ENCODE measurements at regions of chr7 and their contacts with region 1.

Region 1: DNA sequence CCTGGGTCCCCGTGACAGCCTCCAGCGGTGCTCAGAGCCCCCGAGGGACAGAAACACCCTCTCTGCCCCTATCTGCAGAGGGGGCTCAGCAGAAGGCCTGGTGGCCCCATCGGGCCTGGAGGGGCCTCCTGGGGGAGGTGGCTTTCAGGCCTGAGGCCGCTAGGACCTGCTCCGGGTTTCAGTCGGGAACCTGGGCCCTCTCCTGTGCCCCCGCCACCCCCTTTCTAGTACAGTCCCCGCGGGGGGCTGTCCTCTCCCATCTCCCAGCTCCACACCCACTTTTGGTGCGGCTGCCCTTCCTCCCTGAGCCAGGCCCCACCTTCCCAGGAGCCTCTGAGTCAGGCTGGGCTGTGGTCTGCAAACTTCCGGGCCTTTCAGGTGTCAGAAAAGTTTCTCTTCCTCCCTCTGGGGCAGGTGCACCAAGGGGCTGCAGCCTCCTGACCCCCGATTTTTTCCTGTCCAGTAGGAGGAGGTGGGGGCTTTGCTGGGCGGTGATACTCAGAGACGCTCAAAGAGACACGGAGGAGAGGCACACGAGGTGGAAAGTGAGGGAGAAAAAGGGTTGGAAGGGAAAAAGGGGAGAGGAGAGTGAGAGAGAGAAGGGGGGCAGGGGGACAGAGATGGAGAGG is 692 bp downstream of the CARD11 start:
- DNase-seq: peak; percentile 21 to 72 (median 52)
- ATAC-seq: peak; percentile 76
- H3K4me3 ChIP-seq: peak overlapping the region; percentile 85
- H3K4me3 Mint-ChIP-seq: peak overlapping the region; percentile 91 to 98 (median 96)
- H3K27ac ChIP-seq: peak overlapping the region; percentile 100
- H3K27ac Mint-ChIP-seq: peak overlapping the region; percentile 82 to 97 (median 93)
- H3K4me1 ChIP-seq: peaks cover 38 to 54% of the 10 kb centered on the region in 2 donors
- H3K4me1 Mint-ChIP-seq: peaks cover 39 to 73% (median 56%) of the 10 kb centered on the region in 7 donors
- H3K27me3 ChIP-seq: no peaks in the 10 kb centered on the region
- H3K27me3 Mint-ChIP-seq: no peaks in the 10 kb centered on the region

Region 2: DNA sequence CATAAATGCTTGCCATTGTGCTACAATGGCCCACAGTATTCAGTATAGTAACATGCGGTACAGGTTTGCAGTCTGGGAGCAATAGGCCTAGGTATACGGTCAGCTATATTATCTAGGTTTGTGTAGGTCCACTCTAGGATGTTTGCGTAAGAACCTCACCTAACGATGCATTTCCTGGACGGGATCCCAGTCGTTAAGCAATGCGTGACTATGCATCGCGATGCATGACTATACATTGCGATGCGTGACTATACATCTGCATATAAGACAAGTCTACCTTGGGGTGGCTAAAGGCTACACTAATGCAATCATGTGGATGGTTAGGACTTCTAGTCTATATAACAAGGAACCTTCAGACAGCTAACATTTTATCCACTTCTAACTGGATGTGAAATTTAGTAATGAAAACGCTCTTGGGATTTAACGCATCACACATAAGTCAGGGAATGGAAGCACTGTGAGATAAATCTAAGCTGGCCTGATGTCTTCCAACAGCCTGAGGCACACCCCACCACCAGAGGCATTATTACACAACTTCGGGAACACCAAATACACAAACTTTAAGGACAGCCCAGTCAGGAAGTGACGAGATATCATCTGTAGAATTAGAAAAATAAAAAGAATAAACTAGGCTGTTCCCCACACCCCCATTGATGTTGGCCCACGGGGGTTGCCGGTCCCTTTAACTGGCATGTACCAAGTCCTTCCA is 208.1 kb before region 1 on chr7:
- CTCF ChIA-PET with region 1: no interaction called
- POLR2A ChIA-PET with region 1: no interaction called
- intact Hi-C with region 1: no loop called
- DNase-seq: no peak
- ATAC-seq: no peak
- H3K4me3 ChIP-seq: no peak overlapping the region
- H3K4me3 Mint-ChIP-seq: no peak overlapping the region
- H3K27ac ChIP-seq: no peak overlapping the region
- H3K27ac Mint-ChIP-seq: no peak overlapping the region
- H3K4me1 ChIP-seq: peaks cover 0 to 7% of the 10 kb centered on the region in 2 donors
- H3K4me1 Mint-ChIP-seq: peaks cover 24 to 49% (median 28%) of the 10 kb centered on the region in 7 donors
- H3K27me3 ChIP-seq: no peaks in the 10 kb centered on the region
- H3K27me3 Mint-ChIP-seq: no peaks in the 10 kb centered on the region

Region 3: GRCh38 chr7:2863461-2864066 is 179.4 kb before region 1 on chr7:
- CTCF ChIA-PET with region 1: interaction called, 4 read pairs
- POLR2A ChIA-PET with region 1: no interaction called
- intact Hi-C with region 1: loop called in 1 of 2 experiments (anchors 5 kb)
- DNase-seq: peak in 6 of 9 donors; percentile 19 to 77 (median 31)
- ATAC-seq: peak; percentile 94
- H3K4me3 ChIP-seq: peak overlapping the region; percentile 14
- H3K4me3 Mint-ChIP-seq: peak overlapping the region in 9 of 10 donors; percentile 41 to 81 (median 68)
- H3K27ac ChIP-seq: peak overlapping the region; percentile 44
- H3K27ac Mint-ChIP-seq: peak overlapping the region; percentile 65 to 96 (median 88)
- H3K4me1 ChIP-seq: peaks cover 7 to 19% of the 10 kb centered on the region in 2 donors
- H3K4me1 Mint-ChIP-seq: peaks cover 12 to 29% (median 19%) of the 10 kb centered on the region in 7 donors
- H3K27me3 ChIP-seq: no peaks in the 10 kb centered on the region
- H3K27me3 Mint-ChIP-seq: no peaks in the 10 kb centered on the region

Region 4: GRCh38 chr7:2956526-2957368 is 86.2 kb before region 1 on chr7:
- CTCF ChIA-PET with region 1: no interaction called
- POLR2A ChIA-PET with region 1: no interaction called
- intact Hi-C with region 1: loop called in 1 of 2 experiments (anchors 1 kb)
- DNase-seq: peak in 1 of 9 donors; percentile 42
- ATAC-seq: peak; percentile 39
- H3K4me3 ChIP-seq: no peak overlapping the region
- H3K4me3 Mint-ChIP-seq: peak overlapping the region in 1 of 10 donors; percentile 41
- H3K27ac ChIP-seq: peak overlapping the region; percentile 14
- H3K27ac Mint-ChIP-seq: peak overlapping the region in 5 of 9 donors; percentile 24 to 85 (median 81)
- H3K4me1 ChIP-seq: peaks cover 29 to 37% of the 10 kb centered on the region in 2 donors
- H3K4me1 Mint-ChIP-seq: peaks cover 30 to 82% (median 70%) of the 10 kb centered on the region in 7 donors
- H3K27me3 ChIP-seq: no peaks in the 10 kb centered on the region
- H3K27me3 Mint-ChIP-seq: no peaks in the 10 kb centered on the region

Region 5: DNA sequence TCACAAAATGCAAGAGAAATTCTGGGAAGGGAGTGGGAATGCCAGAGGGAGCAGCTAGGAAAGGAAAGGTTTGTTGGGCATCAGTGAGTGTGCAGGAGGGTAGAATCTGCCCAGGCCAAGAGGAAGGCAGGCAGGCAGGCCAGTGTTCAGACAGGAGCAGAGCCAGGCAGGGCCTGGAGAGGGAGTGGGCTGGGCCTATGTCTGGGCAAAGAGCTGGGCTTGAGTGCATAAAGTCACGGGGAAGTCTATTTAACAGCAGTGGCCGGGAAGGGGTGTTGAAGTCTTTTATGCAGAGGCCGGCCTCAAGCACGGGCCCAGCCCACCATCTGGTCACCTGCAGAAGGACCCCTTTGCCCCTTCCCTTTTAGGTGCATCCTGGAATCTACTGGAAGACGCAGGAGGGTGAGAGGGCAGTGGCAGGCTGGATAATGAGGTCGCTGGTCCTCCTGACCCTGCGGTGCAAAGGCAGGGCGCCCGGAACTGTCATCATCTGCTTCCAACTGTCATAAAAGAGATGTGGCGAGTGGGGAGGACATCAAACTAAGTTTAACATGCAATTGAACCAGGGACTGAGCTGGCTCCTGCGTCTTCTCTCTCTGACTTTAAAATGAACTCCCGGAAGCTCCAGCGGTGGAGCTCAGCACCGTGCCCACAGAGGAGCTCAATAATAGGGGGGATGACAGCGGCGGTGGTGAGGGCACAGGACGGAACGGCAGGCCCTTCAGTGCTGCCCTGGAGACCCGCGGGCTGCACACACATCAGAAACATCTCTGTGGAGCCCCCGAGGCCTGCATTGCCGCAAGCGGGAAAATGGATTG is 28.8 kb before region 1 on chr7:
- CTCF ChIA-PET with region 1: interaction called, 4 read pairs
- POLR2A ChIA-PET with region 1: no interaction called
- intact Hi-C with region 1: loop called in 1 of 2 experiments (anchors 2 kb)
- DNase-seq: no peak
- ATAC-seq: no peak
- H3K4me3 ChIP-seq: no peak overlapping the region
- H3K4me3 Mint-ChIP-seq: no peak overlapping the region
- H3K27ac ChIP-seq: no peak overlapping the region
- H3K27ac Mint-ChIP-seq: peak overlapping the region in 6 of 9 donors; percentile 31 to 84 (median 61)
- H3K4me1 ChIP-seq: peaks cover 19 to 23% of the 10 kb centered on the region in 2 donors
- H3K4me1 Mint-ChIP-seq: peaks cover 36 to 65% (median 57%) of the 10 kb centered on the region in 7 donors
- H3K27me3 ChIP-seq: no peaks in the 10 kb centered on the region
- H3K27me3 Mint-ChIP-seq: no peaks in the 10 kb centered on the region

Region 6: DNA sequence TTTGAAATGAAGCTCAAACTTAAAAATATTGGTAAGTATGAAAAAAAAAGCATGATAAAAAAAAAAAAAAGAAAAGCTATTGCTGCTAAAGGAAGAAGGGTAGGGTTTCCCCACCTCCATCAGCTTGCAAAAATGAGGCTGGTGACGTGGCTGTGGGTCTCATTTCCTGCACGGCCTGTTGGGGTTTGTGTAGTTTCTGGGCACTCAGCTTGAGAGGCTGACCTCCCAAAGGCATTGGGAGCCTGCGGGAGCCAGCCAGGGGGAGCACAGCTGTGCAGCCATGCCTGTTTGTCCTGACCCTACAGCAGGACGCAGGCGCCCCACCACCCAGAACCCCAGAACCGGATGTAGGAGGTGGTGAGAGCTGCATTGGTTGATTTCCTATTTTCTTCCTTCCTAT is 49.5 kb after region 1 on chr7:
- CTCF ChIA-PET with region 1: interaction called, 4 read pairs
- POLR2A ChIA-PET with region 1: interaction called, 6 read pairs
- intact Hi-C with region 1: loop called (anchors 1 kb)
- DNase-seq: peak; percentile 35 to 87 (median 82)
- ATAC-seq: peak; percentile 87
- H3K4me3 ChIP-seq: peak overlapping the region; percentile 4
- H3K4me3 Mint-ChIP-seq: peak overlapping the region; percentile 43 to 94 (median 72)
- H3K27ac ChIP-seq: peak overlapping the region; percentile 81
- H3K27ac Mint-ChIP-seq: peak overlapping the region; percentile 93 to 100 (median 99)
- H3K4me1 ChIP-seq: peaks cover 68 to 76% of the 10 kb centered on the region in 2 donors
- H3K4me1 Mint-ChIP-seq: peaks cover 35 to 86% (median 72%) of the 10 kb centered on the region in 7 donors
- H3K27me3 ChIP-seq: no peaks in the 10 kb centered on the region
- H3K27me3 Mint-ChIP-seq: peaks cover 0 to 2% (median 0%) of the 10 kb centered on the region in 5 donors

Region 7: GRCh38 chr7:3154912-3155494 is 112.0 kb after region 1 on chr7:
- CTCF ChIA-PET with region 1: no interaction called
- POLR2A ChIA-PET with region 1: interaction called, 10 read pairs
- intact Hi-C with region 1: loop called (anchors 1 to 2 kb)
- DNase-seq: peak in 8 of 9 donors; percentile 43 to 73 (median 66)
- ATAC-seq: peak; percentile 88
- H3K4me3 ChIP-seq: no peak overlapping the region
- H3K4me3 Mint-ChIP-seq: no peak overlapping the region
- H3K27ac ChIP-seq: no peak overlapping the region
- H3K27ac Mint-ChIP-seq: peak overlapping the region in 5 of 9 donors; percentile 5 to 48 (median 12)
- H3K4me1 ChIP-seq: no peaks in the 10 kb centered on the region
- H3K4me1 Mint-ChIP-seq: peaks cover 6 to 20% (median 14%) of the 10 kb centered on the region in 7 donors
- H3K27me3 ChIP-seq: no peaks in the 10 kb centered on the region
- H3K27me3 Mint-ChIP-seq: no peaks in the 10 kb centered on the region

Region 8: GRCh38 chr7:3561932-3562331 is 519.0 kb after region 1 on chr7:
- CTCF ChIA-PET with region 1: no interaction called
- POLR2A ChIA-PET with region 1: no interaction called
- intact Hi-C with region 1: no loop called
- DNase-seq: no peak
- ATAC-seq: no peak
- H3K4me3 ChIP-seq: no peak overlapping the region
- H3K4me3 Mint-ChIP-seq: no peak overlapping the region
- H3K27ac ChIP-seq: no peak overlapping the region
- H3K27ac Mint-ChIP-seq: no peak overlapping the region
- H3K4me1 ChIP-seq: peaks cover 0 to 3% of the 10 kb centered on the region in 2 donors
- H3K4me1 Mint-ChIP-seq: peaks cover 0 to 38% (median 22%) of the 10 kb centered on the region in 7 donors
- H3K27me3 ChIP-seq: no peaks in the 10 kb centered on the region
- H3K27me3 Mint-ChIP-seq: peaks cover 0 to 3% (median 0%) of the 10 kb centered on the region in 5 donors

Measured in naive thymus-derived CD4-positive, alpha-beta T cell (primary cell).